ENCODE measurements at regions of chr20 and their contacts with region 1.

Region 1: GRCh38 chr20:45362804-45363610 is at the start of gene SYS1:
- DNase-seq: peak; percentile 98 to 99 (median 99)
- H3K4me3 ChIP-seq: peak within 1 kb of the TSS; percentile 92
- H3K4me3 Mint-ChIP-seq: peak within 1 kb of the TSS; percentile 90 to 99 (median 98)
- H3K27ac ChIP-seq: peak within 1 kb of the TSS; percentile 96
- H3K27ac Mint-ChIP-seq: peak within 1 kb of the TSS; percentile 95 to 100 (median 99)
- H3K4me1 ChIP-seq: peaks cover 42% of the 10 kb centered on the region
- H3K4me1 Mint-ChIP-seq: peaks cover 44 to 54% (median 48%) of the 10 kb centered on the region in 3 donors
- H3K27me3 ChIP-seq: no peaks in the 10 kb centered on the region
- H3K27me3 Mint-ChIP-seq: peaks cover 0 to 1% of the 10 kb centered on the region in 2 donors
- total RNA-seq, gene SYS1: 48.3 to 54.0 TPM

Region 2: GRCh38 chr20:45337367-45338120 is 25.5 kb before region 1 on chr20:
- CTCF ChIA-PET with region 1: no interaction called
- POLR2A ChIA-PET with region 1: no interaction called
- DNase-seq: no peak
- H3K4me3 ChIP-seq: no peak overlapping the region
- H3K4me3 Mint-ChIP-seq: no peak overlapping the region
- H3K27ac ChIP-seq: peak overlapping the region; percentile 14
- H3K27ac Mint-ChIP-seq: no peak overlapping the region
- H3K4me1 ChIP-seq: no peaks in the 10 kb centered on the region
- H3K4me1 Mint-ChIP-seq: no peaks in the 10 kb centered on the region
- H3K27me3 ChIP-seq: no peaks in the 10 kb centered on the region
- H3K27me3 Mint-ChIP-seq: no peaks in the 10 kb centered on the region

Region 3: GRCh38 chr20:45350217-45350616 is 12.8 kb before region 1 on chr20:
- CTCF ChIA-PET with region 1: interaction called, 17 read pairs
- POLR2A ChIA-PET with region 1: interaction called, 4 read pairs
- DNase-seq: no peak
- H3K4me3 ChIP-seq: no peak overlapping the region
- H3K4me3 Mint-ChIP-seq: peak overlapping the region in 1 of 7 donors; percentile 43
- H3K27ac ChIP-seq: no peak overlapping the region
- H3K27ac Mint-ChIP-seq: no peak overlapping the region
- H3K4me1 ChIP-seq: peaks cover 8% of the 10 kb centered on the region
- H3K4me1 Mint-ChIP-seq: peaks cover 15 to 29% (median 18%) of the 10 kb centered on the region in 3 donors
- H3K27me3 ChIP-seq: no peaks in the 10 kb centered on the region
- H3K27me3 Mint-ChIP-seq: peaks cover 2 to 3% of the 10 kb centered on the region in 2 donors

Region 4: DNA sequence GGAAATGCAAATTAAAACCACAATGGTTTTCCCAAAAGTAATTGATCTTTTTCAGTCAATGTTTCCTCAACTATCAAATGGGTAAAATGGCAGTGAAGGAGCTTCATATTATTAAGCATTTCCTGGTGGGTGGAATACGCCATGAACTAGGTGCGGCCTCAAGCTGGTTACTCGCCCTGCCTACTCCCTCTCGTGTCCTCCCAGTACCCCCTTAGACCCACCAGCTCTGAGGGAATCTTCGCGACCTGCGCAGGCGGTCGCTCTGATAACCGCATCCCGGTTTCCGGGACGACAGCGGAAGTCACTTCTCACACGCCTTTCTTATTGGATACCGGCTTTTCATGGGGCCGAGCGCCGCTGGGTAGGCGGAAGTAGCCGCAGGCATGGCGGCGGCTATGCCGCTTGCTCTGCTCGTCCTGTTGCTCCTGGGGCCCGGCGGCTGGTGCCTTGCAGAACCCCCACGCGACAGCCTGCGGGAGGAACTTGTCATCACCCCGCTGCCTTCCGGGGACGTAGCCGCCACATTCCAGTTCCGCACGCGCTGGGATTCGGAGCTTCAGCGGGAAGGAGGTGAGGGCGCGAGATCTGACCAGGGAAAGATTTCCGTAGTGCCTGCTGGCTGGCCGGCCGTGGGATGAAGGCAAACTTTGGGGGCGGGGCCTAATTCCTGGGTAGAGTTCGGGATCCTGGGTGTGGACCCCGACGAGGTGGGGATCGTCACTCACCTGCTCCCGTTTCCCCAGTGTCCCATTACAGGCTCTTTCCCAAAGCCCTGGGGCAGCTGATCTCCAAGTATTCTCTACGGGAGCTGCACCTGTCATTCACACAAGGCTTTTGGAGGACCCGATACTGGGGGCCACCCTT is 53.0 kb after region 1 on chr20 and contains the start of gene PIGT:
- CTCF ChIA-PET with region 1: interaction called, 19 read pairs
- POLR2A ChIA-PET with region 1: interaction called, 23 read pairs
- DNase-seq: peak; percentile 85 to 95 (median 94)
- H3K4me3 ChIP-seq: peak within 1 kb of the TSS; percentile 86
- H3K4me3 Mint-ChIP-seq: peak within 1 kb of the TSS; percentile 94 to 99 (median 97)
- H3K27ac ChIP-seq: peak within 1 kb of the TSS; percentile 64
- H3K27ac Mint-ChIP-seq: peak within 1 kb of the TSS; percentile 96 to 99 (median 98)
- H3K4me1 ChIP-seq: peaks cover 21% of the 10 kb centered on the region
- H3K4me1 Mint-ChIP-seq: peaks cover 36 to 54% (median 50%) of the 10 kb centered on the region in 3 donors
- H3K27me3 ChIP-seq: no peaks in the 10 kb centered on the region
- H3K27me3 Mint-ChIP-seq: no peaks in the 10 kb centered on the region
- total RNA-seq, gene PIGT: 76.3 to 76.4 TPM

Region 5: GRCh38 chr20:45450097-45450818 is 87.3 kb after region 1 on chr20:
- CTCF ChIA-PET with region 1: interaction called, 57 read pairs
- POLR2A ChIA-PET with region 1: interaction called, 3 read pairs
- DNase-seq: peak in 2 of 5 donors; percentile 30 to 32
- H3K4me3 ChIP-seq: no peak overlapping the region
- H3K4me3 Mint-ChIP-seq: no peak overlapping the region
- H3K27ac ChIP-seq: no peak overlapping the region
- H3K27ac Mint-ChIP-seq: no peak overlapping the region
- H3K4me1 ChIP-seq: no peaks in the 10 kb centered on the region
- H3K4me1 Mint-ChIP-seq: peaks cover 5 to 9% (median 8%) of the 10 kb centered on the region in 3 donors
- H3K27me3 ChIP-seq: no peaks in the 10 kb centered on the region
- H3K27me3 Mint-ChIP-seq: peaks cover 8 to 21% of the 10 kb centered on the region in 2 donors

Measured in CD8-positive, alpha-beta memory T cell (primary cell).